MCF 10A (cell line): ENCODE measurements at regions of chr18 and their contacts with region 1.

Region 1: GRCh38 chr18:59996370-59996966 is 96.7 kb downstream of the PMAIP1 start:
- DNase-seq: peak; percentile 62
- H3K4me3 Mint-ChIP-seq: no peak overlapping the region
- H3K27ac Mint-ChIP-seq: no peak overlapping the region
- H3K4me1 Mint-ChIP-seq: no peaks in the 10 kb centered on the region
- H3K27me3 Mint-ChIP-seq: peaks cover 69% of the 10 kb centered on the region
- CTCF ChIP-seq: peak; percentile 61

Region 2: GRCh38 chr18:59837586-59837985 is 158.9 kb before region 1 on chr18:
- CTCF ChIA-PET with region 1: interaction called, 14 read pairs
- POLR2A ChIA-PET with region 1: no interaction called
- intact Hi-C with region 1: no loop called
- DNase-seq: peak; percentile 82
- H3K4me3 Mint-ChIP-seq: no peak overlapping the region
- H3K27ac Mint-ChIP-seq: no peak overlapping the region
- H3K4me1 Mint-ChIP-seq: peaks cover 1% of the 10 kb centered on the region
- H3K27me3 Mint-ChIP-seq: no peaks in the 10 kb centered on the region
- CTCF ChIP-seq: peak; percentile 83

Region 3: DNA sequence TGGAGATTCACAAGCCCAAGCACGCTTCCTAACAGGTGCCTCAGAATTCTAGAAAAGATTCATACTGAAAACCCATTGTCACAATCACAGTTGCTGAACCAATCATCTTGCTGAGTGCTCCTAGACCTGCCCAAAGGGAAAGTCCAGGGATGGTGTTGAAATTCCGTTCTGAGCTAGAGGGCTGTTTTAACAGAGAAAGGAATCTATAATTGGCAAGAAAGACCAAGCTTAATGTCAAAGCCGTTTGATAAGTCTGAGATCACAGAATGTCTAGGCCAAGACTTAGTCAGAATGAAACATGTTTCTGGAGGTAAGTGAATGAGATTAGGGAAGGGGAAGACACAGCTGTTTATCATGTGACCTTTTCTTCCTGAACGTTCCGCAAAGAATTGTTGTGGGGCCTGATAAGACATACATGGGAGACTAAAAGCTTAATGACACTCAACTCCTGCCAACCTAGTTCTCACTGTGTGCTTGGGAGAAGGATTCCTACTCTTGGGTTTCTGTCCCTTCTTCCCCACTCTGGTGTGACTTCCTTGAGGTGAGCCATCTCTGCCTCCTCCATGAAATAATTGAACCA is 69.1 kb before region 1 on chr18:
- CTCF ChIA-PET with region 1: no interaction called
- POLR2A ChIA-PET with region 1: no interaction called
- intact Hi-C with region 1: no loop called
- DNase-seq: peak; percentile 76
- H3K4me3 Mint-ChIP-seq: no peak overlapping the region
- H3K27ac Mint-ChIP-seq: no peak overlapping the region
- H3K4me1 Mint-ChIP-seq: peaks cover 19% of the 10 kb centered on the region
- H3K27me3 Mint-ChIP-seq: no peaks in the 10 kb centered on the region
- CTCF ChIP-seq: no peak

Region 4: GRCh38 chr18:59980188-59980637 is 16.3 kb before region 1 on chr18:
- CTCF ChIA-PET with region 1: interaction called, 26 read pairs
- POLR2A ChIA-PET with region 1: no interaction called
- intact Hi-C with region 1: no loop called
- DNase-seq: no peak
- H3K4me3 Mint-ChIP-seq: no peak overlapping the region
- H3K27ac Mint-ChIP-seq: no peak overlapping the region
- H3K4me1 Mint-ChIP-seq: no peaks in the 10 kb centered on the region
- H3K27me3 Mint-ChIP-seq: no peaks in the 10 kb centered on the region
- CTCF ChIP-seq: no peak

Region 5: GRCh38 chr18:60019463-60019840 is 23.0 kb after region 1 on chr18:
- CTCF ChIA-PET with region 1: interaction called, 12 read pairs
- POLR2A ChIA-PET with region 1: no interaction called
- intact Hi-C with region 1: no loop called
- DNase-seq: peak; percentile 21
- H3K4me3 Mint-ChIP-seq: no peak overlapping the region
- H3K27ac Mint-ChIP-seq: no peak overlapping the region
- H3K4me1 Mint-ChIP-seq: peaks cover 12% of the 10 kb centered on the region
- H3K27me3 Mint-ChIP-seq: peaks cover 18% of the 10 kb centered on the region
- CTCF ChIP-seq: no peak

Region 6: GRCh38 chr18:60413944-60414547 is 417.6 kb after region 1 on chr18:
- CTCF ChIA-PET with region 1: interaction called, 24 read pairs
- POLR2A ChIA-PET with region 1: no interaction called
- intact Hi-C with region 1: loop called (anchors 1 kb)
- DNase-seq: peak; percentile 20
- H3K4me3 Mint-ChIP-seq: no peak overlapping the region
- H3K27ac Mint-ChIP-seq: no peak overlapping the region
- H3K4me1 Mint-ChIP-seq: no peaks in the 10 kb centered on the region
- H3K27me3 Mint-ChIP-seq: peaks cover 74% of the 10 kb centered on the region
- CTCF ChIP-seq: peak; percentile 51

Region 7: GRCh38 chr18:60549338-60549960 is 553.0 kb after region 1 on chr18:
- CTCF ChIA-PET with region 1: interaction called, 42 read pairs
- POLR2A ChIA-PET with region 1: no interaction called
- intact Hi-C with region 1: loop called (anchors 1 kb)
- DNase-seq: peak; percentile 53
- H3K4me3 Mint-ChIP-seq: no peak overlapping the region
- H3K27ac Mint-ChIP-seq: no peak overlapping the region
- H3K4me1 Mint-ChIP-seq: no peaks in the 10 kb centered on the region
- H3K27me3 Mint-ChIP-seq: peaks cover 58% of the 10 kb centered on the region
- CTCF ChIP-seq: peak; percentile 64